ENCODE measurements at regions of chr7 and their contacts with region 1.

Region 1: DNA sequence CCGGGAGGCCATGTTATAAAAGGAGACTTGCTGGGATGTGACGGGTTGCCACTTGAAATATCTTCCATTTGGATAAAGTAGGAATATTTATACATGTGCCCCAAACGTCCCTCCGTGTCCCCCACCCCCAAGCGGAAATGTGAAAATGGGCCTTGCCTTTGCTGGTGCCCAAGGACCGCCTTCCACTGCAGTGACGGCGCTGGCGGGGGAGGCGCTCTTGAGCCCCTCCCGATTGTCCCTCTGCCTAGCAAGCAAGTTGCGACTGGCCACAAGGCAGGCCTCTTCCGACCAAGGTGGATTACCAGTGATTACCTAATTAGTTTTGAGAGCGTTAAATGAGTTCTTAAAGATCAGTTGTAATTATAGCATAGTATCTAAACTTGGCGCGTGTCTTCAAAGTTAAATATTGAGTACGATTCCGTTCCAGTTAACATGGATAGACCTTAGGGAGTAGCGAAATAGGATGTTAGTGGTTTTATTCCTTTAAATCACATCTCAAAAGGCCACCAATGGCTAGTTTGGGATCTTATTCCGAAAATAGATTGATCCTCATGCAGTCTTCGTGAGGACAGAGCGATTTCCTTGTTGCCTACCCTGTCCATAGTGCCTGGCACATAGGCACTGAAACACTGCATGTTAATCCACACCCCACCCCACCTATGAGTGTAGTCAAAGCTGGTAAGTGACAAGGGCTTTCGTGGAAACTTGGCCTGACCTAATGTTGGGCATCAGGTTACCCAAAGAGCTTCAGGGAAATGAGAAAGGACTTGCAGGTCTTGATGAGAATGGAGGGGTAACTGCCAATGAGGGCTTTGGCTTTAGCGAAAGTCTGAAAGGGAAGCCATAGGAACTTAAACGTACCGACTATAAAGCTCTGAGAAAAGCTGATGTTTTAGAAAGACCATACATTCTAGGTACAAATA is 1.1 kb downstream of the PPIA start:
- DNase-seq: peak; percentile 58 to 73
- H3K4me3 ChIP-seq: peak overlapping the region; percentile 70 to 98 (median 90)
- H3K27ac ChIP-seq: peak overlapping the region; percentile 98
- H3K4me1 ChIP-seq: peaks cover 0 to 5% (median 0%) of the 10 kb centered on the region in 4 experiments; a peak in 3 of 7 replicates
- H3K27me3 ChIP-seq: no peaks in the 10 kb centered on the region
- CTCF ChIP-seq: peak; percentile 33 to 68 (median 54); a peak in 3 of 4 replicates
- EP300 ChIP-seq: no peak
- POLR2A ChIP-seq: peak; percentile 68 to 79
- RAD21 ChIP-seq: peak; percentile 29 to 35; a peak in 2 of 4 replicates

Region 2: GRCh38 chr7:44606450-44607254 is 190.9 kb before region 1 on chr7 and contains the start of gene OGDH:
- CTCF ChIA-PET with region 1: no interaction called
- POLR2A ChIA-PET with region 1: interaction called, 11 read pairs
- DNase-seq: peak; percentile 93 to 100
- H3K4me3 ChIP-seq: peak within 1 kb of the TSS; percentile 72 to 92 (median 84)
- H3K27ac ChIP-seq: peak within 1 kb of the TSS; percentile 93
- H3K4me1 ChIP-seq: peaks cover 0 to 7% (median 1%) of the 10 kb centered on the region in 4 experiments; a peak in 2 of 7 replicates
- H3K27me3 ChIP-seq: no peaks in the 10 kb centered on the region
- CTCF ChIP-seq: no peak
- EP300 ChIP-seq: peak in 1 of 2 experiments; percentile 3; a peak in 1 of 3 replicates
- POLR2A ChIP-seq: peak; percentile 85 to 94
- RAD21 ChIP-seq: no peak
- total RNA-seq, gene OGDH: 89.1 and 91.6 TPM in 2 replicates

Region 3: GRCh38 chr7:44650772-44651171 is 146.8 kb before region 1 on chr7:
- CTCF ChIA-PET with region 1: no interaction called
- POLR2A ChIA-PET with region 1: no interaction called
- DNase-seq: no peak
- H3K4me3 ChIP-seq: no peak overlapping the region
- H3K27ac ChIP-seq: no peak overlapping the region
- H3K4me1 ChIP-seq: no peaks in the 10 kb centered on the region
- H3K27me3 ChIP-seq: no peaks in the 10 kb centered on the region
- CTCF ChIP-seq: no peak
- EP300 ChIP-seq: no peak
- POLR2A ChIP-seq: no peak
- RAD21 ChIP-seq: no peak

Region 4: GRCh38 chr7:44769776-44770662 is 27.6 kb before region 1 on chr7:
- CTCF ChIA-PET with region 1: interaction called, 5 read pairs
- POLR2A ChIA-PET with region 1: interaction called, 30 read pairs
- DNase-seq: no peak
- H3K4me3 ChIP-seq: no peak overlapping the region
- H3K27ac ChIP-seq: no peak overlapping the region
- H3K4me1 ChIP-seq: peaks cover 0 to 4% (median 0%) of the 10 kb centered on the region in 4 experiments; a peak in 1 of 7 replicates
- H3K27me3 ChIP-seq: no peaks in the 10 kb centered on the region
- CTCF ChIP-seq: no peak
- EP300 ChIP-seq: no peak
- POLR2A ChIP-seq: 0 out of 3 replicates have a peak, but pooled peaks of 1 of the 2 experiments have one; percentile 4
- RAD21 ChIP-seq: no peak

Region 5: GRCh38 chr7:44811086-44811485 is 13.5 kb after region 1 on chr7:
- CTCF ChIA-PET with region 1: interaction called, 5 read pairs
- POLR2A ChIA-PET with region 1: interaction called, 31 read pairs
- DNase-seq: no peak
- H3K4me3 ChIP-seq: no peak overlapping the region
- H3K27ac ChIP-seq: no peak overlapping the region
- H3K4me1 ChIP-seq: no peaks in the 10 kb centered on the region
- H3K27me3 ChIP-seq: no peaks in the 10 kb centered on the region
- CTCF ChIP-seq: no peak
- EP300 ChIP-seq: no peak
- POLR2A ChIP-seq: no peak
- RAD21 ChIP-seq: no peak

Region 6: GRCh38 chr7:44824894-44825526 is 27.4 kb after region 1 on chr7:
- CTCF ChIA-PET with region 1: interaction called, 3 read pairs
- POLR2A ChIA-PET with region 1: interaction called, 15 read pairs
- DNase-seq: no peak
- H3K4me3 ChIP-seq: no peak overlapping the region
- H3K27ac ChIP-seq: no peak overlapping the region
- H3K4me1 ChIP-seq: no peaks in the 10 kb centered on the region
- H3K27me3 ChIP-seq: no peaks in the 10 kb centered on the region
- CTCF ChIP-seq: no peak
- EP300 ChIP-seq: no peak
- POLR2A ChIP-seq: 0 out of 3 replicates have a peak, but pooled peaks of 1 of the 2 experiments have one; percentile 15
- RAD21 ChIP-seq: no peak

Region 7: GRCh38 chr7:44847508-44847920 is 49.9 kb after region 1 on chr7:
- CTCF ChIA-PET with region 1: interaction called, 12 read pairs
- POLR2A ChIA-PET with region 1: interaction called, 35 read pairs
- DNase-seq: peak in 1 of 2 experiments; percentile 33
- H3K4me3 ChIP-seq: peak overlapping the region; percentile 64 to 93 (median 85)
- H3K27ac ChIP-seq: peak overlapping the region; percentile 86
- H3K4me1 ChIP-seq: peaks cover 0 to 3% (median 0%) of the 10 kb centered on the region in 4 experiments; a peak in 2 of 7 replicates
- H3K27me3 ChIP-seq: no peaks in the 10 kb centered on the region
- CTCF ChIP-seq: peak; percentile 68 to 75 (median 70)
- EP300 ChIP-seq: no peak
- POLR2A ChIP-seq: no peak
- RAD21 ChIP-seq: peak; percentile 64 to 69

Region 8: GRCh38 chr7:44944821-44945220 is 147.2 kb after region 1 on chr7:
- CTCF ChIA-PET with region 1: no interaction called
- POLR2A ChIA-PET with region 1: no interaction called
- DNase-seq: no peak
- H3K4me3 ChIP-seq: no peak overlapping the region
- H3K27ac ChIP-seq: no peak overlapping the region
- H3K4me1 ChIP-seq: no peaks in the 10 kb centered on the region
- H3K27me3 ChIP-seq: no peaks in the 10 kb centered on the region
- CTCF ChIP-seq: no peak
- EP300 ChIP-seq: no peak
- POLR2A ChIP-seq: no peak
- RAD21 ChIP-seq: no peak